ENCODE measurements at regions of chr1 and their contacts with region 1.

Region 1: GRCh38 chr1:114581335-114582287 is at the start of gene BCAS2:
- DNase-seq: peak; percentile 99
- H3K4me3 ChIP-seq: peak within 1 kb of the TSS; percentile 61 to 71 (median 63)
- H3K27ac ChIP-seq: peak within 1 kb of the TSS; percentile 86 to 91 (median 89)
- H3K4me1 ChIP-seq: peaks cover 0 to 33% (median 26%) of the 10 kb centered on the region in 4 donors
- H3K27me3 ChIP-seq: no peaks in the 10 kb centered on the region
- CTCF ChIP-seq: no peak
- EP300 ChIP-seq: peak; percentile 79 to 93 (median 87)
- POLR2A ChIP-seq: peak; percentile 82 to 85
- total RNA-seq, gene BCAS2: 29.1 to 47.6 (median 35.9) TPM

Region 2: DNA sequence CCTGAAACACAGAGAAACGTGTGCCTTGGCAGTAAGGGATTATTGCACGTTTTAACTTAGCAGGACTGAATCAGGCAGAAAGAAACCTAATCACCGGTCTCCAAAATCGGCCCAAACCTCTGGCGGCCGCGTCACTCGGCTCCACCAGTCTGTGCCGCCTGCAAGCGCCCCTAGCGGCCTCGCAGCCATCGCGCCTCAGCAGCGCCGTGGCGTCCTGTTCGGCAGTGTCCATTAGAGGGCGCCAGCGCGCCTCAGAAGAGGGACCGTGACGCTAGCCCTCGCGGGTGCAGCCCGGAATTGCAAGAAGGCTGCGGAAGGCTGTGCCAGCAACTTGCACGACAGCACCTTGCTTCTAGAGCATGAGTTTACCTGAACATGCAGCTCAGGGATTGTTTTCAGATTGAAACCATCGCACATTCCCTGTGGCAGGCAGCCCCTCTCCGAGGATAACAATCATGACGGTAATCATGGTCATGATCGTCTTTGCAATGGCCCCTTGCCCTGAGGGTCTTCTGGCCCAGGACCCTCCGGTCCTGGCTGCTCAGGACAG is 235.1 kb before region 1 on chr1:
- intact Hi-C with region 1: loop called (anchors 1 kb)
- DNase-seq: peak; percentile 97
- H3K4me3 ChIP-seq: peak overlapping the region; percentile 38 to 53 (median 48)
- H3K27ac ChIP-seq: peak overlapping the region; percentile 82 to 85 (median 84)
- H3K4me1 ChIP-seq: peaks cover 0 to 13% (median 10%) of the 10 kb centered on the region in 4 donors
- H3K27me3 ChIP-seq: no peaks in the 10 kb centered on the region
- CTCF ChIP-seq: peak; percentile 100
- EP300 ChIP-seq: no peak
- POLR2A ChIP-seq: no peak

Region 3: GRCh38 chr1:114670083-114671010 is 88.7 kb after region 1 on chr1:
- intact Hi-C with region 1: loop called (anchors 2 kb)
- DNase-seq: peak; percentile 95
- H3K4me3 ChIP-seq: peak overlapping the region; percentile 63 to 88 (median 78)
- H3K27ac ChIP-seq: peak overlapping the region; percentile 66 to 79 (median 77)
- H3K4me1 ChIP-seq: peaks cover 0 to 16% (median 7%) of the 10 kb centered on the region in 4 donors
- H3K27me3 ChIP-seq: no peaks in the 10 kb centered on the region
- CTCF ChIP-seq: peak in 2 of 4 experiments; percentile 14 to 22
- EP300 ChIP-seq: no peak
- POLR2A ChIP-seq: no peak

Region 4: DNA sequence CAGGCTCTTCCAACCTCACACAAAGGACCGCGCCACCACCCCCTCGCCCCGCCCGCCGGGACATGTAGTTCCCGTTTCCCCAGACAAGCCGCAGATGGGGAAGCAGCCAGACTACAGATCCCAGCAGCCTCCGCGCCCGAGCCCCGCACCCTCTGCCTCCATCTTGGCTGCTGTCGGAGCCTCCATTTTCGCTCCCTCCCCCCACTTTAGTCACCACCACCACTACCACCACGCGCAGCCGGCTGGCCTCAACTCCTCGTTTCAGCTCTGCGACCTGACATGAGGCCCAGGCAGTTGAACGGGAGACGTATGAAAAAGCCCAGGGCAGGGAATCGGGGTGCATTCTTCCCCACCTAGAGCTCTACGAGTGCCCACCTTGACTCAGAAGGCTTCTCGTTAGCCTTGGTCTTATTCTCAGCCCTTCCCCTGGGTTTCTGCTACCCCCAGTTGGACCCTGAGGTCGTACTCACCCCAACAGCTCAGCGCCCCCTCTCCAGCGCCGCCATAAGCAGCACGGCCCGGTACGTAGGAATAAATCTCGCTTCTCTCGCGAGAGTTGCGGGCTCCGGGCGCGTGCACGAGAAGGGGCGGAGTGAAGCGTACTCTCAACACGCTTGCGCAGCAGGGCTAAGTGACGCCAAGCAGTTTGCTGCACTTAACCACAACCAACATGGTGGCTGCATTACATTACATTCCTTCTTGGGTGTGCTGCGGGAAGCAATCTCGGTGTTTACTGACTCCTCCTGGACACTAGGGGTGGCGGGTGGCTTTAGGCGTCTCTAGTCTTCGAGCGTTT is 176.0 kb after region 1 on chr1 and contains the start of gene CSDE1:
- intact Hi-C with region 1: loop called (anchors 1 kb)
- DNase-seq: peak; percentile 99
- H3K4me3 ChIP-seq: peak within 1 kb of the TSS; percentile 79 to 99 (median 88)
- H3K27ac ChIP-seq: peak within 1 kb of the TSS; percentile 97 to 100 (median 98)
- H3K4me1 ChIP-seq: peaks cover 0 to 50% (median 48%) of the 10 kb centered on the region in 4 donors
- H3K27me3 ChIP-seq: no peaks in the 10 kb centered on the region
- CTCF ChIP-seq: peak in 2 of 4 experiments; percentile 34 to 35
- EP300 ChIP-seq: peak in 1 of 4 donors; percentile 13
- POLR2A ChIP-seq: peak; percentile 89 to 90
- total RNA-seq, gene CSDE1: 1,738 to 2,762 (median 1,986) TPM